Caco-2 (cell line): ENCODE measurements at regions of chr2 and their contacts with region 1.

Region 1: GRCh38 chr2:170764880-170765261 is 5.3 kb upstream of the ERICH2 start:
- DNase-seq: no peak
- H3K4me3 ChIP-seq: no peak overlapping the region
- H3K4me3 Mint-ChIP-seq: peak overlapping the region; percentile 45
- H3K27ac Mint-ChIP-seq: peak overlapping the region; percentile 86
- H3K4me1 ChIP-seq: peaks cover 55% of the 10 kb centered on the region
- H3K4me1 Mint-ChIP-seq: peaks cover 26% of the 10 kb centered on the region
- H3K27me3 ChIP-seq: no peaks in the 10 kb centered on the region
- H3K27me3 Mint-ChIP-seq: no peaks in the 10 kb centered on the region
- CTCF ChIP-seq: no peak

Region 2: DNA sequence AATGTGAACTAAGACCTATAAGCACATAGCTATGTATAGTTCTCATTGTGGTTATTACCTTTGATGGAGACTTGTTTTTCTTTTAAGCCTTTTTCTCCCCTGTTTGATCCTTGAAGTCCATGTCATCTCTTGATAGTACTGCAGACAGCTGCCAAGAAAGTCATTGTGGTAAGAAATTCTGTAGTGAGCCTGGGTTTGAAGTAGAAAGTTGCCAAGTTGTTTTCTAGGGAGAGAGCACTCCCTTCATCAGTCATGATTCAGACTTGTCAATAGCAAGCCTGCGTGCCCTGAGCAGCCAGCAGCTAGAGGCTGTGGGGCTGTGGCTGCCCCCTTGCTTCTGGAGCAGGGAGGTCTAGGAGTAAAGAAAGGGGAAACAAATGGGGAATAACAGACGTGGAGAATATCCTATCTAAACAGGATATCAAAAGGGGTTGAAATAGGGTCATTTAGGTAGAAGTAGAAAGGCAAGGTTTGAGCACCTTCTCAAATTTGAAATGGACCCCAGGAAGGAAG is 41.4 kb before region 1 on chr2:
- CTCF ChIA-PET with region 1: no interaction called
- POLR2A ChIA-PET with region 1: no interaction called
- intact Hi-C with region 1: loop called (anchors 1 kb)
- DNase-seq: no peak
- H3K4me3 ChIP-seq: no peak overlapping the region
- H3K4me3 Mint-ChIP-seq: no peak overlapping the region
- H3K27ac Mint-ChIP-seq: no peak overlapping the region
- H3K4me1 ChIP-seq: peaks cover 11% of the 10 kb centered on the region; the same call in 1 of the 2 replicates
- H3K4me1 Mint-ChIP-seq: peaks cover 8% of the 10 kb centered on the region
- H3K27me3 ChIP-seq: no peaks in the 10 kb centered on the region
- H3K27me3 Mint-ChIP-seq: no peaks in the 10 kb centered on the region
- CTCF ChIP-seq: no peak

Region 3: GRCh38 chr2:170744248-170745002 is 20.4 kb before region 1 on chr2:
- CTCF ChIA-PET with region 1: interaction called, 6 read pairs
- POLR2A ChIA-PET with region 1: interaction called, 8 read pairs
- intact Hi-C with region 1: loop called (anchors 1 kb)
- DNase-seq: peak; percentile 58 to 66
- H3K4me3 ChIP-seq: peak overlapping the region; percentile 6; the same call in 1 of the 2 replicates
- H3K4me3 Mint-ChIP-seq: peak overlapping the region; percentile 53
- H3K27ac Mint-ChIP-seq: peak overlapping the region; percentile 46
- H3K4me1 ChIP-seq: peaks cover 18% of the 10 kb centered on the region
- H3K4me1 Mint-ChIP-seq: peaks cover 11% of the 10 kb centered on the region
- H3K27me3 ChIP-seq: no peaks in the 10 kb centered on the region
- H3K27me3 Mint-ChIP-seq: no peaks in the 10 kb centered on the region
- CTCF ChIP-seq: no peak